ENCODE measurements at regions of chr11 and their contacts with region 1.

Region 1: DNA sequence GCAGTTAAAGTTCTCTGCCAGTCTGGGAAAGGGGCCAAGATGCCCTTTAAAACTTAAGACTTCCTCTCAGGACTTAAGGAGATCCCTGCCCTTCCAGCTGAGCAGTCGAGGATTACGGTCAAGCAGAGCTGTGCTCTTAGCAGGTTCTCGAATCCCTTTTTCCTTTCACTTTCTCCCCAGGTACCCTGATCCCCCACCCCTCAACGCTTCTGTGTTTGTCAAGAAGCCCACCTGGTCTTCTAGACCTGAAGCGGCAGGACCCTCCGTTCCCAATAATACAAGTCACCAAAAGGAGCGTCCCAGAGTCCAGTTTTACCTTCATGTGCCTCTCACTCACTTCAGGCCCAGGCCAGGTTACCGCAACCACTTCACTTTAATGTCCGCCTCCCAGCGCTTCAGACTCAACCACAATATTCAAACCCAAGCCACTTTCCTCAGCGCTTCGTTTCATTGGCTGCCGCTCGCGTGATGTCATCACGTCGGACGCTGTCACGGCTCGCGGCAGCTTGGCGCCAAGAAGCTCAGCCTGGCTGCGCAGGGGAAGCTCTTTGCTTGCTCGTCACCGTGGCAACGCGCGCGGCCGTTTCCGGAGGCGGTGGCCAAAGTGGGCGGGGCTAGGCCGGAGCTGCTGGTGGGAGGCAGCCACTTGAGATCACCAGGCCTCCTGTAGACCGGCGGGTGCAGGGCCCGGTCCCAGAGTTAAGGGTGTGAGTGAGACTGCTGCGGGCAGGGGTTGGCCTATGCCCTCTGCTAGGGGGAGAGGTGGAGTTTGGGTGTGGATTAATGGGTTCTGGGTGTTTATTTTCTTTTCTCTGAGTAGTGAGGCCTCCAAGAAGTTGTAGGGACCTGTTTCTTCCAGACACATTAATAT is at the starts of genes KIF18A and METTL15:
- DNase-seq: peak; percentile 100
- H3K4me3 ChIP-seq: peak within 1 kb of the TSS; percentile 74 to 99 (median 87)
- H3K27ac ChIP-seq: peak within 1 kb of the TSS; percentile 98
- H3K4me1 ChIP-seq: peaks cover 36% of the 10 kb centered on the region
- H3K27me3 ChIP-seq: no peaks in the 10 kb centered on the region
- CTCF ChIP-seq: no peak
- POLR2A ChIP-seq: peak; percentile 68
- total RNA-seq, gene KIF18A: 14.1 and 18.5 TPM in 2 replicates
- total RNA-seq, gene METTL15: 10.9 and 12.1 TPM in 2 replicates

Region 2: DNA sequence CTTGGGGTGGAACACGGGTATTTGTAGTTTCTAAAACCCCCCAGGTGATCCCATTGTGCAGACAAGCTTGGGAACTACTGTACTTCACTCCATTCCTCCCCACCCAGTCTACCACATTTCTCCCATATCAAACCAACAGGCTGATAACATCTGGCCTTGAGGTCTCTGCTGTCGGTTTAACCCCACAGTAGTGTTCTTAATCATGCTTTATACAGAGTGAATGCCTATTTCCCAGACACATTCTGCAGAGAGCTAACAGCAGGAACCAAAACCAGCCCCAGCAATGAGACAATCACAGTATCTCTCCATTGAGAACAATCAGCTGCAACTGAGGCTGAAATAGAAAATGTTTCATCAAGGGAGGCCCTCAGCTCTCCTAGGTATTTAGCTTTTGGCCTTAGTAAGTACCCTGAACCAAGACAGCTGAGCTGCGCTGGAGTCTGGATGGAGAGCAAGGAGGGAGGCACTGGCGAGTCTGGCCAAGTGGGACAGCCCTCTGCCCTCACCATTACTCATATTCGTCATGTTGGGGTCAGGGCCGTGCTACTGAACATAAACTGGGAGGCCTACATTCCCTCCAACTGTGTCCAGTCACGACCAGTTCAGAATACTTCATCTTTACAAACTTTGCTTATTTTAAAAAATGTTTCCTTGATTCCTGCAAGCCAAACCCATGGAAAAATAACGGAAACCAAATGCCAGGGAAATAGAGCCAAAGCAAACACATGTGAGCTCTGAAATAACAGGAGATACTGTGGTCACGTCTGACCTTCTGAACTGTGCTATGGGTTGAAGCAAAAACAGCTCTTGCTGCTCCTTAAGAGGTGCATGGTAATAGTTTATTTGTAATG is 826.0 kb before region 1 on chr11:
- CTCF ChIA-PET with region 1: no interaction called
- POLR2A ChIA-PET with region 1: no interaction called
- dilution Hi-C with region 1: no loop called
- intact Hi-C with region 1: no loop called
- DNase-seq: peak; percentile 99
- H3K4me3 ChIP-seq: no peak overlapping the region
- H3K27ac ChIP-seq: peak overlapping the region; percentile 56
- H3K4me1 ChIP-seq: peaks cover 23% of the 10 kb centered on the region
- H3K27me3 ChIP-seq: peaks cover 13 to 17% of the 10 kb centered on the region in 2 experiments
- CTCF ChIP-seq: no peak
- POLR2A ChIP-seq: peak; percentile 90

Region 3: DNA sequence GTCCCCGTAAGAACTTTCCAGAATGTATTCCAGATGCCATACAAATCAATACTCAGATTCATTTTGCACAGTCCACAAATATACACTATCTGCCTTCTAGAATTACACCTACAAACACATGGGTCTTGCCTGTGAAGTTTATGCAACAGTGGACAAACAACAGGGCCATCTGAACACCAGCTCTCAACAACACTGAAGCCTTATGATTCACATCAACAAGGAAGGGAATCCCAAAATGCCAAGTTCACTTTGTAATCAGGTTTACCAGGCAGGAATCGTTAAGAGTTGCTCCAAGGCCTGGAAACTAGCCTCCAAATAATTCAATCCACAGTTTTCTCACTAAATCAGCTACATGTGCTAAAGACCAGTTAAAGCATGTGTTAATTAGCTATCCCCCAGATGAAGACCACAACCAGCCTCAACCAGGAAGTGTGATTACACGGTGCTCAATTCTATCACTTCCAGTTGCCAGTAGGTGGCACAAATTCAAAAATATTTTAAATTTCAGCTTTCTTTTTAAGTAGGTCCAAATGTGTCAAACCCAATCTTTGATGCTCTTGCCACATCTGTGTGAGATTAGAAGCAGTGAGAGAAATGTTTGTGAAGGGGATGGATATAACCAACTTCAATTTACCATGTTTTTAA is 268.6 kb before region 1 on chr11:
- CTCF ChIA-PET with region 1: interaction called, 11 read pairs
- POLR2A ChIA-PET with region 1: no interaction called
- dilution Hi-C with region 1: no loop called
- intact Hi-C with region 1: no loop called
- DNase-seq: peak; percentile 29
- H3K4me3 ChIP-seq: no peak overlapping the region
- H3K27ac ChIP-seq: no peak overlapping the region
- H3K4me1 ChIP-seq: no peaks in the 10 kb centered on the region
- H3K27me3 ChIP-seq: peaks cover 5 to 16% of the 10 kb centered on the region in 2 experiments
- CTCF ChIP-seq: peak; percentile 13 to 26
- POLR2A ChIP-seq: no peak

Region 4: DNA sequence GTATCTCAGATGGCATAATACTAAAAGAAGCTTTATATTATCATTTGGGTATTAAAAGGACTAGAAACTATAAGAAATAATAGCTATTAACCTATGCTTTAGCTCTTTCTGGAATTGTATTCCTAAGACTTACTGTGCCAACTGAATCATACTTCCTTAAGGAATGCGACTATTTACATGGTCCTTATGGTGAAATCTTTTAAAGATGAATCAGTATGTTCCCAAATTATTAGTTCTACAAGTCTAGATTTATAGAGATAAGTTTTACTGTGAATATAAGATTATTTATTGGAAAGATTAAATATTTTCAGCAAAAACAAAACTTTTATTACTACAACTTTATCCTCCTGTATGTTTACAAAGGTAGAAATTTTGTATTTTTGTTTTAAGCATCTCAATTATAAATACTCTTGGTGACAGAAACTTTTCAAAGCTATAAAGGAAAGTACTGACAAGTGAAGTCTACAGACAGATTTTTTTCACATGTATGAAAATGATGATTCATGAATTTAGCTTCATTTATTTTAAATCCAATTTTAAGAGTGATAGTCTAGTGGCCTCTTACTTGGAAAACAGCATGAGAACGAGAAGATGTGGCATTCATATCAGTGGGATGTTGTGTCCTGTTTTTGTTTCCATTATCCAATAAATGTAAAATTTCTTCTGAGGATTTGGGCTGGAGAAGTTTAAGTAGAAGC is 17.8 kb before region 1 on chr11:
- CTCF ChIA-PET with region 1: interaction called, 11 read pairs
- POLR2A ChIA-PET with region 1: interaction called, 3 read pairs
- dilution Hi-C with region 1: no loop called
- intact Hi-C with region 1: loop called (anchors 2 kb)
- DNase-seq: peak; percentile 50
- H3K4me3 ChIP-seq: no peak overlapping the region
- H3K27ac ChIP-seq: peak overlapping the region; percentile 74
- H3K4me1 ChIP-seq: peaks cover 34% of the 10 kb centered on the region
- H3K27me3 ChIP-seq: no peaks in the 10 kb centered on the region
- CTCF ChIP-seq: no peak
- POLR2A ChIP-seq: no peak

Region 5: GRCh38 chr11:28228196-28228895 is 120.4 kb after region 1 on chr11:
- CTCF ChIA-PET with region 1: no interaction called
- POLR2A ChIA-PET with region 1: no interaction called
- dilution Hi-C with region 1: no loop called
- intact Hi-C with region 1: loop called (anchors 2 kb)
- DNase-seq: peak; percentile 56
- H3K4me3 ChIP-seq: no peak overlapping the region
- H3K27ac ChIP-seq: peak overlapping the region; percentile 68
- H3K4me1 ChIP-seq: peaks cover 19% of the 10 kb centered on the region
- H3K27me3 ChIP-seq: no peaks in the 10 kb centered on the region
- CTCF ChIP-seq: no peak
- POLR2A ChIP-seq: no peak

Region 6: DNA sequence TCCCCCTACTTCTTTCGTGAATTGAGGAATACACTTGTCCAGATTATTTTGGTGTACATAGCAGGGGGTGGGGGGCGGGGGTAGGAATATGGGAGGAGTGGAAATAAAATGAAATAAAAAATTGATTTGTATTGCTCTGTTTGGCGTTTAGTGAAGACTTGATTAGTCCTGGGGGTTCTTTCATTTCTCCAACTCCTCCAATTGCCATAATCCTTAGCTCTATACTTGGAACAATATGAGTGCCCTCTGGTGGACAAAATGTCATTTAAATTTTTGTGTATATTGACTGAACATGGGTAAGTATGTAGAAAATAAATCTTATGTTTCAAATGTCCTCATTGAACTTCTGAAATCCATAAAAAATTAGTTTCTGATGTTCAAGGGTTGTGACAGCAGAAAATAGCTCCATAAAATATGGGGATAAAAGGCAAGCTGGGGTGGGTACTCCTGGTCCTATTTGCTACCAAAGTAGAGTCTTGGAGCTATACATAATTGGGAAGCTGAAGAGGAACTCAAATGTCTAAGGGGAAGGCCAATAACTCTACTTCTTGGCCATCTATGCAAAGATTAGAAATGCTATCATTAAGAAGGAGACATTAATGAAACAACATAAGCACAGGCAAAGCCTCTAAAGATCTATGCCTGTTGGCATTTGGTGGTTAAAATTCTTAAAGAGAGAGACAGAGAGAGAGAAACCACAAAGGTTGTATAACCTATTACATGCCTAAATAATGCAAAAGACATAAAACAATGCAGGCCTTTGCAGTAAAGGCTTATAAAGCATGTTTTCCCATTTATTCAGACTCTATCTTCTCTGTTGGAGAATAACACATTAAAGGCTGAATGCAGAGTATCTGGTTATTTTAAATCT is 421.8 kb after region 1 on chr11:
- CTCF ChIA-PET with region 1: interaction called, 21 read pairs
- POLR2A ChIA-PET with region 1: no interaction called
- dilution Hi-C with region 1: no loop called
- intact Hi-C with region 1: loop called (anchors 5 kb)
- DNase-seq: peak; percentile 65
- H3K4me3 ChIP-seq: no peak overlapping the region
- H3K27ac ChIP-seq: no peak overlapping the region
- H3K4me1 ChIP-seq: no peaks in the 10 kb centered on the region
- H3K27me3 ChIP-seq: no peaks in the 10 kb centered on the region
- CTCF ChIP-seq: peak; percentile 15 to 25
- POLR2A ChIP-seq: no peak

Region 7: GRCh38 chr11:29019960-29020683 is 912.1 kb after region 1 on chr11:
- CTCF ChIA-PET with region 1: interaction called, 3 read pairs
- POLR2A ChIA-PET with region 1: no interaction called
- dilution Hi-C with region 1: no loop called
- intact Hi-C with region 1: loop called (anchors 1 kb)
- DNase-seq: peak; percentile 80
- H3K4me3 ChIP-seq: no peak overlapping the region
- H3K27ac ChIP-seq: peak overlapping the region; percentile 97
- H3K4me1 ChIP-seq: peaks cover 31% of the 10 kb centered on the region
- H3K27me3 ChIP-seq: no peaks in the 10 kb centered on the region
- CTCF ChIP-seq: peak; percentile 50 to 70
- POLR2A ChIP-seq: peak; percentile 22

Region 8: DNA sequence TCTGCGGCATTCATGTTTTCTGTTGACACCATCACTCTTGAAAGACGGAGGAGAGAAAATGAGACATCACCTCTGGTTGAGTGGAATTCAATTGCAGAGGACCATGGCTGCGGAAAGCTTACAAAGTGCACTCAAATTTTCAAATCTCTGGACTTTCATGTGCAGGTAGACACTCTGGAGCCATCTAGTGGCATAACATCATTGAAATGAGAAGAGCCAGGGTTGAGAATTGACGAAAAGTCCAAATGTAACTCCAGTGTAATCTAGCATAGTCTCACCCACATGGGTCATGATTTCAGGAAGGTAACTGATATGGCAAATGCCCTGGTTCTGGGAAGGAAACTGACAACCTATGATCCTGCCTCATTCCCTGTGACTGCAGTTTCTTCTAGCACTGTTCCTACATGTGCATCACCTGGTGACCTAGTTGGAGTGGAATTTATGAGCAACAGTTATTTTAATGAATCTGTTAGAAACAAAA is 1221.0 kb after region 1 on chr11:
- CTCF ChIA-PET with region 1: interaction called, 4 read pairs
- POLR2A ChIA-PET with region 1: no interaction called
- dilution Hi-C with region 1: no loop called
- intact Hi-C with region 1: loop called (anchors 5 kb)
- DNase-seq: peak; percentile 75
- H3K4me3 ChIP-seq: no peak overlapping the region
- H3K27ac ChIP-seq: no peak overlapping the region
- H3K4me1 ChIP-seq: peaks cover 7% of the 10 kb centered on the region
- H3K27me3 ChIP-seq: no peaks in the 10 kb centered on the region
- CTCF ChIP-seq: peak; percentile 63 to 66
- POLR2A ChIP-seq: no peak